ENCODE measurements at regions of chr2 and their contacts with region 1.

Region 1: DNA sequence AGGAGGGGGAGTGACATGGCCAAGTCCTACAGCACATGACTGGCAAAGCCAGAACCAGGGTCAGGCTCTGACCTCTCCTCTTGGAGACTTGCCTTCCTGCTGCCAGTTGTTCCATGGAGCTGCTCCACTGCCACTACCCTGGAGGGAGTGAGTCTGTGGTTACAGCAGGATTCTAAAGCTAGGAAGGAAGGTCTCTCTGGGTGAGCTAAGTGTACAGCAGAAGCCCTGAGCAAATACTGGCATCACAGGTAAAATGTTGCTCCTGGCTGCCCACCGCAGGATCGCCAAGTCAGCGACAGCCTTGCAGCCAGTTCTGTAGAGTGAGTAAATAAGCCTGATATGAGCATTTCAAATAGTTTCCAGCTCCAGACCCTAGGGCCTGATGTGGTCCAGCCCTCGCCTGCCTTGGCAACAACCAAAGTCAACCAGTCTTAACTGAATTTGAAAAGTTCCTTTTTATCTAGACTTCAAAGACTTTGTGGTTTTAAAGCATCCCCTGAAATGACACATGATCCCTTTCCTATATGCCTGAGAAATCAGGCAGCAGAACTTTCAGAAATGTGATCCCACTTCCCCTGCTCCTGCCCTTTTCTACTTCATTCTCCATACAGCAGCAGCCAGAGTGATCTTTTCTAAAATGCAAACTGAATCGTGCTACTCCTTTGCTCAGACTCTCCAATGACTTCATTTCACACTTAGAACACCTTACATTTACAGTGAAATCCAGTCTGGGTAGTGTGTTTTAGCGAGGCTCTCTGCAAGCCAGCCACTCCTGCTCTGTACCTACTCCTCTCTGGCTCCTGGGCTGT is 114.3 kb downstream of the MGAT5 start:
- DNase-seq: no peak
- CTCF ChIP-seq: no peak

Region 2: GRCh38 chr2:133489641-133490410 is 878.4 kb before region 1 on chr2:
- CTCF ChIA-PET with region 1: no interaction called
- POLR2A ChIA-PET with region 1: no interaction called
- DNase-seq: no peak
- CTCF ChIP-seq: no peak

Region 3: GRCh38 chr2:134041877-134042276 is 326.3 kb before region 1 on chr2:
- CTCF ChIA-PET with region 1: no interaction called
- POLR2A ChIA-PET with region 1: no interaction called
- DNase-seq: no peak
- CTCF ChIP-seq: no peak

Region 4: DNA sequence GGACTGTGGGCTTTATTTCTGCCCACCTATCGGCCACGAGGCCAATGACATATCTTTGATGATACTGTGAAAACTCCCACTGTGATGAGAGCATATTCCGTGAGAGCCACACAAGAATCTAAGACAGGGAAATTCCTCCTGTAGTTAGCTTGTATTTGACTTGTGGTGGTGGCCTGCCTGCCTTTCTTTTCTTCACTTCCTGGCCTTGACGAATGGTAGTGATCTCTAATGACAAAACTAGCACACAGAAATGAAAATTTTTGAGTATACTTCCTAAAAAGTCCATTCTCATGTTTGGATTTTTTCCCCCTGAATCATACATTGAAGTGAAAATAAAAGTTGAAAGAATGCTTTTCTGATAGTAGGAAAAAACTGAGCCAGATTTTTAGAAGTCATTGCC is 20.0 kb before region 1 on chr2:
- CTCF ChIA-PET with region 1: interaction called, 10 read pairs
- POLR2A ChIA-PET with region 1: no interaction called
- DNase-seq: no peak
- CTCF ChIP-seq: no peak